ENCODE measurements at regions of chr4 and their contacts with region 1.

Region 1: GRCh38 chr4:167308876-167309275 is 74.6 kb upstream of the SPOCK3 start:
- DNase-seq: no peak
- H3K4me3 Mint-ChIP-seq: no peak overlapping the region
- H3K27ac Mint-ChIP-seq: no peak overlapping the region
- H3K4me1 Mint-ChIP-seq: no peaks in the 10 kb centered on the region
- H3K27me3 Mint-ChIP-seq: no peaks in the 10 kb centered on the region

Region 2: GRCh38 chr4:167290678-167291077 is 18.2 kb before region 1 on chr4:
- intact Hi-C with region 1: loop called (anchors 1 kb)
- DNase-seq: no peak
- H3K4me3 Mint-ChIP-seq: no peak overlapping the region
- H3K27ac Mint-ChIP-seq: no peak overlapping the region
- H3K4me1 Mint-ChIP-seq: no peaks in the 10 kb centered on the region
- H3K27me3 Mint-ChIP-seq: no peaks in the 10 kb centered on the region